Transverse colon (tissue), 4 donors: ENCODE measurements at regions of chr15 and their contacts with region 1.

Region 1: DNA sequence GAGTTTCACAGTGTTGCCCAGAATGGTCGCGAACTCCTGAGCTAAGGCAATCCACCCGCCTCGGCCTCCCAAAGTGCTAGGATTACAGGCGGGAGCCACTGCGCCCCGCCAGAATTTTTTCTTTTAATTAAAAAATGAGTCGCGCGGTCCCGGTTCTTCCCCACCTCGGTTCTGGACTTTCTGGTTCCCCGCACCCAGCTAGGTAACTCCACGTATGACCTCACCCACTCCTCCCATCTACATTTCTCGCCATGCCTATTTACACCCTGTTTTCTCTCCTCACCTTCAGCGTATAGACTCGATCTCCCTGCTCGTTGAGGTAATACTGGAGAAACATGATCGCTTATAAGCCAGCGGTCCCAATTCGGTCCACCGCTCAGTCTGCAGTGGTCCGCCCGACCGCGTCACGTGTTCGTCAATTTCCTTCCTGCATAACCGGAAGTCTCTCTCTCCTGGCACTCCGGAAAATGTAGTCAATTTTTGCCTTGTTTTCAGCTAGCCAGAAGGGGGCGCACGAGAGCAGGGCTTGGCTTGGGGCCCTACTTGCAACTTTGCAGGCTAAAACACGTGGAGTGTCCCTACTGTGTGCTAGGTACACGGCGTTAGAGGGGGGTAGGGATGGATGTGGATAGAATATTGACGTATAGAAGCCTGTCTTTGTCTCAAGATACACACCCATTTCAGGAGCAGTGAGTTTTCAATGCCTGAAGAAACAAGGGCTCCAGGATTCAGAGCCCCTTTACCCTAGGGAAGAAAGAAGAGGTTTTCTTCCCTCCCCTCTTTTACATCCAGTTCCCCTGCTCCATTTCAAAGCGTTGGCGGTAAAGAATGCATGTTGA is at the starts of genes NOP10 and NUTM1:
- DNase-seq: peak; percentile 93
- H3K4me3 ChIP-seq: peak within 1 kb of the TSS; percentile 75 to 98 (median 87)
- H3K27ac ChIP-seq: peak within 1 kb of the TSS; percentile 89 to 99 (median 94)
- H3K4me1 ChIP-seq: peaks cover 0 to 26% (median 8%) of the 10 kb centered on the region in 4 donors
- H3K27me3 ChIP-seq: no peaks in the 10 kb centered on the region
- CTCF ChIP-seq: peak; percentile 91 to 99 (median 97)
- EP300 ChIP-seq: no peak
- POLR2A ChIP-seq: peak; percentile 85
- total RNA-seq, gene NOP10: 41.1 to 166 (median 152) TPM
- total RNA-seq, gene NUTM1: not detected

Region 2: DNA sequence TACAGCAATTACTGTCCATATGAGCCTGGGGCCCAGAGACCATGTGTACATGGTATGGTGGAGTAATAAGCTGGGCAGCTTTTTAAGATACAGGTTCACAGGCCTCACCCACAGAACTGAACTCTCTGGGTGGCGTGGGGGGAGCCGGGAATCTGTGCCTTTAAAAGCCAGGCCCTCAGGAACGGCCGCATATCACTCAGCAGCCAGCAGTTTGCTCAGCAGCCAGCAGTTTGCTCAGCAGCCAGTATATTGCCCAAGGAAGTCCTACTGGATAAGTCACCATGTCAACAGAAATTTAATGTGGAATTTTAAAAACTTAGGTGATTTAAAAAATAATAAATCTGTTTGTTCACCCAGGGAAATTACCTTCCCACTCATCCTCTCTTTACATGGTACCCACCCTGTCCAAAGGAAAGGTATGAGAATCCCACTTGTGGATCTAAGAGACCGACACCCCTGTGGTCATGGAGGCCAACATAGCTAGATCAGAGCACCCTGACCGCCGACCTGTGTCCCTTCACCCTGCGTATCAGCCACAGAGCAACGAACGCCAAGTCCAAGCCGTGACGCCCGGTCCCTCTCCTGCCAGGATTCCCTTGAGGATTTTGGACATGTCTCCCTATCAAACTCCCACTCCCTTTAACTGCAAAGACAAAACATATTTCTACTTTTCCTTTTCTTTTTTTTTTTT is 470.4 kb before region 1 on chr15:
- in situ Hi-C with region 1: no loop called
- intact Hi-C with region 1: no loop called
- DNase-seq: no peak
- H3K4me3 ChIP-seq: no peak overlapping the region
- H3K27ac ChIP-seq: no peak overlapping the region
- H3K4me1 ChIP-seq: no peaks in the 10 kb centered on the region
- H3K27me3 ChIP-seq: no peaks in the 10 kb centered on the region
- CTCF ChIP-seq: no peak
- EP300 ChIP-seq: no peak
- POLR2A ChIP-seq: no peak

Region 3: DNA sequence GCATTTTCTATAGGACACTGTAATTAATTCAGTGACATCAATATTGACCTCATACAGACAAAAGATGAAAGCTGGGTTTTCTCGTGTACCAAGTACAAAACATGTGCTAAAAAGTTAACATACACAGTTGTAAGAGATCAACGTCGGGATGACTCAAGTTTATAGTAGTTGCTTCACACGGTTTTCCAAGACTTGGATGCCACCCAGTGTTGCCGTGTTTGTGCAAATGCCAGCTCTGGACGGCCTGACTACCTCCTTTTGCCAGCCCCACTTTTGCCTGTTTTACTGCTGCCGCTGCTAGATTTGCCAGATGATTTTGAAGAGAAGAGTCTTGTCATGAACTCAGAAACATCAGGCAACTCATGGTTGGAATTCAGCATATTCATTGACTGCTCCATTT is 258.9 kb before region 1 on chr15:
- in situ Hi-C with region 1: loop called in 1 of 4 experiments (anchors 25 kb)
- intact Hi-C with region 1: no loop called
- DNase-seq: peak; percentile 53
- H3K4me3 ChIP-seq: no peak overlapping the region
- H3K27ac ChIP-seq: peak overlapping the region in 1 of 4 donors; percentile 46
- H3K4me1 ChIP-seq: peaks cover 0 to 17% (median 0%) of the 10 kb centered on the region in 4 donors
- H3K27me3 ChIP-seq: no peaks in the 10 kb centered on the region
- CTCF ChIP-seq: no peak
- EP300 ChIP-seq: no peak
- POLR2A ChIP-seq: no peak

Region 4: GRCh38 chr15:34241372-34242330 is 101.3 kb before region 1 on chr15:
- in situ Hi-C with region 1: loop called in 1 of 4 experiments (anchors 10 kb)
- intact Hi-C with region 1: no loop called
- DNase-seq: peak; percentile 18
- H3K4me3 ChIP-seq: no peak overlapping the region
- H3K27ac ChIP-seq: no peak overlapping the region
- H3K4me1 ChIP-seq: no peaks in the 10 kb centered on the region
- H3K27me3 ChIP-seq: no peaks in the 10 kb centered on the region
- CTCF ChIP-seq: peak; percentile 75 to 84 (median 76)
- EP300 ChIP-seq: no peak
- POLR2A ChIP-seq: no peak